ENCODE measurements at regions of chr3 and their contacts with region 1.

Region 1: DNA sequence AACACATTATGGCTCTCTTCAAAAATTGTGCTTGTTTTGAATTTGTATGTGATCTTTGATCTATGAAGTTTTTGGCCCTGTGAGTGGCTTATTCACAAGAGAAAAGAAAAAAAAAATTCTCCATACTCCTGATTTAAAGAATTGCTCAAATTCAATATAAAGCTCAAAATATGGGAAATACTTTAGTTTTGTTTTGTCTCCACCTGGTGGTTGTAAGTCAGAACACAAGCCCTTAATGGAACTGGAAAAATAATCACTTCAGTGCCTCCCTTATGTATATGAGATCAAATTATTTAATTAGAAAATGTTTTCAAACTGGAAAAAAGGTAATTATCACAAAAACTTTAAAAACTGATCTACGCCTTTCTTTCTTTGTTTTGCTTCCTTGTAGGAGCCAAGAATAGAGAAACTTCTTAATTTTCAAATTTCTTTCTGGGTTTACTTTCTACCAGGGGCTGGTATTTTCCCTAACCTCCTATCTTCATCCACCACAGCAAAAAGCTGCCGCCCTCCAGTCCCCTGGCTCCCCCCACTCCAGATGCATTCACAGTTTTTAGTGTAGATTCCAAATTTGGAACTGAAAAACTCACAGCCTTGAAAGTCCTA is 50.6 kb downstream of the SERP1 start:
- DNase-seq: no peak
- ATAC-seq: peak in 3 of 4 donors; percentile 57 to 70 (median 65)
- H3K4me3 ChIP-seq: no peak overlapping the region
- H3K27ac ChIP-seq: no peak overlapping the region
- H3K4me1 ChIP-seq: no peaks in the 10 kb centered on the region
- H3K27me3 ChIP-seq: no peaks in the 10 kb centered on the region
- CTCF ChIP-seq: peak; percentile 83

Region 2: DNA sequence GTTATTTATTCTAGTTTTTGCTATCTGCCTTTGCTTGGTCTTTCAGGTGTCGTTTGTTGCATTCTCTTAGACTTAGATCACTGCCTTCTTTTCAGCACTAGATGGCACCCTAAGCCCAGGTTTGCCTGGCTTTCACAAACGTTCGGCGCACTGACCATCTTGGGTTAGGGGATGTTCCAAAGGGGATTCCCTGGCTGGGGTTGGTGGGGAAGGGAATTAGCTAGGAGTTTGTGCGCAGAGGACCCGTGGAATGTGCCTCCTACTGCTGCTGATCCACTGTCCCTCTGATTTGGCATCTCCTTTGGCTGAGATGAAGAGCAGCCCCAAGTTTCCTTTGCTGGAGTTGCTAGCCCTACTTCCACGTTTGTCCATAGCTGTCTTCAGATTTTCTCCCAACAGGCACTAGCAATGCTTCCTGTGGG is 558.8 kb before region 1 on chr3:
- intact Hi-C with region 1: loop called in 1 of 2 experiments (anchors 10 kb)
- DNase-seq: no peak
- ATAC-seq: peak; percentile 81 to 88 (median 86)
- H3K4me3 ChIP-seq: peak overlapping the region; percentile 31
- H3K27ac ChIP-seq: no peak overlapping the region
- H3K4me1 ChIP-seq: peaks cover 8% of the 10 kb centered on the region
- H3K27me3 ChIP-seq: no peaks in the 10 kb centered on the region
- CTCF ChIP-seq: peak; percentile 79

Region 3: DNA sequence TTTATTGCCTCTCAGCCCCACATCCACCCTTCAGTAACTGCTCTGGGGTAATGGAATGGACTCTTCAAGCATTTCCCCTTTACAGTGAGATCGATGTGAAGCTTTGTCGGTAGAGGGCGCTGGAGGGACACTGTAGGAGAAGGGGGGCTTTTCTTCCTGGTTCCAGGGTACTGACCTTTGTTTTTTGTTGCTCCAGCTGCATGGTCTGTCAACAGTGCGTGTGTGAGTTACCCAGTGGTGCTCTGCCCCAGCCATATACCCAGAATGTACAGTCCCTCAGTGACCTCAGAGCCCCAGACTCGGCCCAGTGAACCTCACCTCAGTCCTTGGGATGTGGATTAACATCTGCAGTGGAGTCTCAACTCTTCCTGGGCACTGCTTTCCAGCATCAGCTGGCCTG is 267.8 kb before region 1 on chr3:
- intact Hi-C with region 1: loop called (anchors 2 to 5 kb)
- DNase-seq: no peak
- ATAC-seq: peak; percentile 60 to 78 (median 71)
- H3K4me3 ChIP-seq: no peak overlapping the region
- H3K27ac ChIP-seq: no peak overlapping the region
- H3K4me1 ChIP-seq: no peaks in the 10 kb centered on the region
- H3K27me3 ChIP-seq: no peaks in the 10 kb centered on the region
- CTCF ChIP-seq: peak; percentile 64

Region 4: GRCh38 chr3:150286390-150287147 is 209.1 kb before region 1 on chr3:
- intact Hi-C with region 1: loop called (anchors 2 to 5 kb)
- DNase-seq: no peak
- ATAC-seq: peak; percentile 65 to 80 (median 70)
- H3K4me3 ChIP-seq: no peak overlapping the region
- H3K27ac ChIP-seq: no peak overlapping the region
- H3K4me1 ChIP-seq: no peaks in the 10 kb centered on the region
- H3K27me3 ChIP-seq: no peaks in the 10 kb centered on the region
- CTCF ChIP-seq: peak; percentile 63

Region 5: GRCh38 chr3:150538324-150539208 is 42.9 kb after region 1 on chr3:
- intact Hi-C with region 1: no loop called
- DNase-seq: no peak
- ATAC-seq: peak in 2 of 4 donors; percentile 27 to 46
- H3K4me3 ChIP-seq: no peak overlapping the region
- H3K27ac ChIP-seq: no peak overlapping the region
- H3K4me1 ChIP-seq: peaks cover 6% of the 10 kb centered on the region
- H3K27me3 ChIP-seq: no peaks in the 10 kb centered on the region
- CTCF ChIP-seq: no peak

Measured in psoas muscle (tissue), 8 donors.